Astrocyte of the cerebellum (primary cell): ENCODE measurements at regions of chr4 and their contacts with region 1.

Region 1: GRCh38 chr4:152850377-152850776 is 70.6 kb downstream of the ARFIP1 start:
- DNase-seq: no peak
- H3K4me3 ChIP-seq: no peak overlapping the region
- CTCF ChIP-seq: no peak

Region 2: DNA sequence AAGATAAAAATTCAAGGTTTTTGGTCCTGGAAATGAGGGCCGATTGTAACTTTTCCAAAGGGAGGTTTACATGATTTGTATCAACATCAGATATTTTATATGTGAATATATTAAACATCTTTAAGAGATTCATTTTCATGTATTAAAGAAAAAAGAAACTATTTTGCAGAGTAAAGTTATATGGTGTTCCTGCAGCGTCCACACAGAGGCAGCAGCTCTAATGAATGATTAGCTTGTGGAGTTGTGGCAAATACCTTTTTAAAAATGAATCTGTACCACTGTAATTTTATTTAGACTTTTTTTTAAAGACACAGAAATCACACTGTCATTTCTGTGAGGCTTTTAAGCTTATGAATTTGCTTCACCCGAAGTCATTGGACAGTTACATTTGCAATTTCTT is 60.1 kb after region 1 on chr4:
- in situ Hi-C with region 1: no loop called
- DNase-seq: no peak
- H3K4me3 ChIP-seq: no peak overlapping the region
- CTCF ChIP-seq: no peak

Region 3: DNA sequence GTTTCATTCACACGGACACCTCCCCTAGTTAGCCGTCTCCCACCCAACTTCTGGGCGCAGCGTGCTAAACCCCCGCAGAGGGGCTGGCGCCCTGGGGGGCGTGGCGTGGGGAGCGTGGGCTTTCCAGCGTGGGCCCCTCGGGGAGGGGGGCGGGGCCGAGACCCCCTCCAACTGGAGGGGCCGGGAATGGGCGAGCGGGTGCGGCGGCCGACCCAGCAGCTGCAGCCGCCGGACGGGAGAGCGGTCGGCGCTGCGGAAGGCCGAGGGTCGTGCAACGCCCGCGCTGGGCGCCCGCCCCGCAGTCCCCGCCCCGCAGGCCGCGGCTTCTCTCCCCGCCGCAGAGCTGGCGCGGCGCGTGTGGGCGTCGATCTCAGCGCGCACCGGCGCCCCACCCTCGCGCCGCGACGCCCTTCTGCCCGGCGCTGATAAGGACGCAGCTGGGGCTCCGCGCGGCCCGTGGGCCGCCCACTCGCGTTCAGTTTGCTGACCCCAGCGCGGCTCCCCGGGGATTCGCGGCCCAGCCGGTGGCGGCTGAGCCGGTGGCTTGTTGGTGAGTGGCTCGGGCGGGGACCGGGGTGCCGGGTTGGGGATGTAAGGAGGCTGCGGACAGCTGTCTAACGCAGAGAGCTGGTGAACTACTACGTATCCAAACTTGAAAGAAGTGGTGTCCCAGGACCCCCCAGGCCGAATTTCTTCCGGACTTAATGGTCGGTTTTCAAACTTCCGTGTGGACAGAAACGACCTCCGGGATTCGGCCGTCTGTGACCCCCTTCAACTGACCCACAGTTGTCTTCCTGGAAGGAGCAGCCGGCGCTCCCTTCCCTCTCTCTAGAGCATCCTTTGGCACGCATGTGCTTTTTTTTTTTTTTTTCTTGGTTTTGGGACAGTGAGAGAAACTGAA is 87.2 kb after region 1 on chr4:
- in situ Hi-C with region 1: no loop called
- DNase-seq: no peak
- H3K4me3 ChIP-seq: peak overlapping the region; percentile 57
- CTCF ChIP-seq: no peak

Region 4: DNA sequence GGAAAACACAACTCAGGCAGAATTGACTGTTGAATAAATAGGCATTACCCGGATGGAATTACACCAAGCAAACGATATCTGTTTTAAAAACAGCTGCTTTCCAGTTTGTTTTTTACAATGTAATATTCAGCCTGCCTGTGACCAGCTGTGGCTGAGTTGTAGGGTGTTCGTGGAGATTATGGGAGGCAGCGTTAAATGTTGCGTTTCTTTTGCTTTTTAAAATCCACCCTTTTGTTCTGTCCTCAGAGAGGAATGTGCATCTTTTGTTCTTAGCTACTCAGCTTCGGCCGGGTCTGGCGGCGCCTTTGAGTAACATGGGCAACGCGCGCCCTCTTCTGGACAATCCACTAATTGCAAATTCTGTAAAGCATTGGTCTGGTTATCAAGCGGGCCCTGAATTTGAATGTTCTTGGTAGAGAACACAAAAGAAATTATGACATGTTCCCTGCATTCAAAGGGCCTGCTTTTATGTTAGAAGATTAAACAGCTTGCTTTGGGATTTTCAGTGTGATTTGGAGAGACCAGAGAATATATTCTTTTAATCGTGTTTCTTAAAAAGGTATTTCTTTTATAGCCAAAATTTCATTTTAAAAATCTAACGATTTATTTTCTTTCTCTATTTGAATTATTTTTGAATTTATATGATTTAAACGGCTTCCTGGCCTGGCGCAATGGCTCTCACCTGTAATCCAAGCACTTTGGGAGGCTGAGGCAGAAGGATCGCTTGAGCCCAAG is 277.6 kb after region 1 on chr4:
- in situ Hi-C with region 1: loop called (anchors 10 kb)
- DNase-seq: peak; percentile 80
- H3K4me3 ChIP-seq: peak overlapping the region; percentile 16
- CTCF ChIP-seq: peak; percentile 69

Region 5: GRCh38 chr4:153344131-153345010 is 494.0 kb after region 1 on chr4 and contains the start of gene MND1:
- in situ Hi-C with region 1: no loop called
- DNase-seq: peak; percentile 41
- H3K4me3 ChIP-seq: peak within 1 kb of the TSS; percentile 70
- CTCF ChIP-seq: peak; percentile 84